ENCODE measurements at regions of chr3 and their contacts with region 1.

Region 1: GRCh38 chr3:138781012-138781470 is 53.7 kb downstream of the PIK3CB start:
- DNase-seq: no peak
- H3K4me3 ChIP-seq: no peak overlapping the region
- H3K27ac ChIP-seq: no peak overlapping the region
- H3K4me1 ChIP-seq: no peaks in the 10 kb centered on the region
- H3K27me3 ChIP-seq: no peaks in the 10 kb centered on the region
- CTCF ChIP-seq: no peak

Region 2: GRCh38 chr3:138740072-138740471 is 41.0 kb before region 1 on chr3:
- CTCF ChIA-PET with region 1: no interaction called
- POLR2A ChIA-PET with region 1: no interaction called
- intact Hi-C with region 1: no loop called
- DNase-seq: no peak
- H3K4me3 ChIP-seq: no peak overlapping the region
- H3K27ac ChIP-seq: no peak overlapping the region
- H3K4me1 ChIP-seq: no peaks in the 10 kb centered on the region
- H3K27me3 ChIP-seq: no peaks in the 10 kb centered on the region
- CTCF ChIP-seq: no peak

Region 3: DNA sequence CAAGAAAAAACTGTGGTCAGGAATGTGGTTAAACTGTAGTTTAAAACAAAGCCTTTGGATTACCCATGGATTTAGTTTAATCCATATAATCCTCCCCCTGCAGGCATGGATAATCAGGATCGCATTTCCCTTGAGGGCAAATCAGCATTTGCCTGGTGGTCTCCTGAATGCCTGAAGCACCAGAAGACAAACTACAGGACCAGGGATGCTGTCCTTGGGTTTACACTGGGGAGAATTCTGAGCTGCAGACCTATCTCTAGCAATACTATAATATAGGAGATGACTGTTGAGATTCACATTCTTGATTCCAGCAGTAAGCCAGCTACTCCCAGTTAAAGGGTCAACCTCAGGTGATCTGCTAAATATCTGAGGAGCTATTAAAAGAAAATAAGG is 43.1 kb after region 1 on chr3:
- CTCF ChIA-PET with region 1: no interaction called
- POLR2A ChIA-PET with region 1: no interaction called
- intact Hi-C with region 1: loop called (anchors 5 kb)
- DNase-seq: peak in 1 of 2 experiments; percentile 6
- H3K4me3 ChIP-seq: no peak overlapping the region
- H3K27ac ChIP-seq: peak overlapping the region; percentile 54
- H3K4me1 ChIP-seq: peaks cover 14% of the 10 kb centered on the region
- H3K27me3 ChIP-seq: no peaks in the 10 kb centered on the region
- CTCF ChIP-seq: no peak

Measured in PC-9 (cell line).